Cardiac septum (tissue), 1 donor: ENCODE measurements at regions of chr17 and their contacts with region 1.

Region 1: DNA sequence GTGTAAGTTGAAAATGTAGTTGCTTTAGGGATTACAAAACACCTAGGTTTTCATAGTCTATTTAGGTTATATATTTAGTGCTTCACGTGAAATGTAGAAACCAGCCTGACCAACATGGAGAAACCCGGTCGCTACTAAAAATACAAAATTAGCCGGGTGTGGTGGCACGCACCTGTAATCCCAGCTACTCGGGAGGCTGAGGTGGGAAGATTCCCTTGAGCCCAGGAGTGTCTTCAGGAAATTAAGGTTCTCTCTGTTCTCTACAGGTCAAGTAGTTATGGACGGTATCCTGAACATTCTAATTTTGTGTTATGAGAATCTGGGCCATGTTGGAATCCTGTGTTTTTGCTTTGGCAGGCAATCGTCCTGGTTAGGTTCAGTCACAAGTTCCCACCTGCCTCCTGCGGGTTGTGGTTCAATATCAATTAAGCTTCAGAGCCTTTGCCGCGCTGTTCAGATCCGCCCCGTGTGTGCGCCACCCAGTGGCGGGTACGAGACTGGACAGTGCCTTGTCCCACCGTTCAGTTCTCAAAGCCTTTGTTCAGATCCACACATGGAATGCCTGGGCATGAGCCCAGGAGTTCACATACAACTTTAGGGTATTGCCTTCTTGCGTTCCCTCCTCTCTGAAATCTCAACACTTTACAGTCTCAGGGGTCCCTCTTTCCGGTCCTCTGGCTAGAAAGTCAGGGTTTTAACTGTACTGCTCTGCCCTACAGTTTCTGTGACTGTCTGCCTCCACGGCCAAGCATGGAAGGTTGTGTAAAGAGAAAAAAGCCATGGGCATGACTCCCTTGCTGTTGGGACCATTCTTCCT is 41.7 kb downstream of the HEATR6 start:
- DNase-seq: peak; percentile 79

Region 2: DNA sequence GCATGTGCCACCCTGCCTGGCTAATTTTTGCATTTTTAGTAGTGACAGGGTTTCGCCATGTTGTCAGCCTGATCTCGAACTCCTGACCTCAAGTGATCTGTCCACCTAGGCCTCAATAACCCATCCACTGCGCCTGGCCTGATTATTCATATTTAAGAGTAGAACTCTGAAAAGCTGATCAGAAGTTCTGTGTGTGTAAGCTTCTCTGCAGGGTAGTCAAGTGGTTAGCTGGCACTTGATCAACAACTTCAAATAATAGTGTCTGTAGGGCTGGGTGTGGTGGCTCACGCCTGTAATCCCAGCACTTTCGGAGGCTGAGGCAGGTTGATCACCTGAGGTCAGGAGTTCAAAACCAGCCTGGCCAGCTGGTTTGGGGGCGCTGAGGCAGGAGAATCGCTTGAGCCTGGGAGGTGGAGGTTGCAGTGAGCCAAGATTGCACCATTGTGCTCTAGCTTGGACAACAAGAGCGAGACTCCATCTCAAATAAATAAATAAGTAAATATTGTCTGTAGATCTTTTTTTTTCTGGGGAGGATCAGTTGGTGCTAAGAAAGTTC is 118.0 kb before region 1 on chr17:
- intact Hi-C with region 1: loop called (anchors 5 kb)
- DNase-seq: no peak

Region 3: GRCh38 chr17:59941131-59941530 is 95.9 kb before region 1 on chr17:
- intact Hi-C with region 1: loop called (anchors 10 kb)
- DNase-seq: no peak

Region 4: GRCh38 chr17:59972778-59973177 is 64.2 kb before region 1 on chr17:
- intact Hi-C with region 1: no loop called
- DNase-seq: no peak